A549 (cell line): ENCODE measurements at regions of chr5 and their contacts with region 1.

Region 1: DNA sequence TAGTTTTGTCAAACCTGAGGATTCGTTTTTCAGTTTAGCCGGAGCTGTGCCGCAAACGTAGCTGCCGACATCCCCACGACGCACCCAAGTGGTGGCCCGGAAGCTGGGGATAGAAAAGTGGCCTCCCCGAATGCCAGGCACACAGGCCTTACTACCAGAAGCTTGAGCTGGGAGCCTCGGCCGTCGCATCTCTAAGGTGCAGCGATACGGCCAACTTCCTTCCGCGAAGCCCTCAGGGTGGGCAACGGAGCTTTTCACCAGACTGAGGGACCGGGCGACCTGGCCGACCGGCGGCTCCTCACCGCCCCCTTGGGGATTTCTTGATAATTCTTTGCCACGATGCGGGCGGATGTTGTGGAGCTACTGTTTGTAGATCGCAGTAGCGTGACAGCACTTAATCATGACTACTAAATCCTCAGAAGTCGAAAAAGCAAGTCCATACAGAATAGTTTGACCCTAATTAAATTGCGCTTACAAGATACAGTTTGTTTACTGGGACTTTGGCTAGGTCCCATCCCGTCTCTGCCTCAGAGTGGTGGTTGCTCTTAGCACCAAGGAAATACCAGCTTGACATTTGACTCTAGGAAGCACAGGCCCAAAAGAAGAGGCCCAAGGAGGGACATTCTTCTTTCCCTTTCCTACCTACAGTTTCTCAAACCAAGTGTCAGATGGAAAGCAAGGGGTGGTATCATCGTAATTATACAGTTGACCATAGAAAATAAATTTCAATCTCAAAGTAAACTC is 613 bp upstream of the TMEM267 start:
- DNase-seq: peak; percentile 85 to 90
- ATAC-seq: peak; percentile 88 to 92
- H3K4me3 ChIP-seq: peak overlapping the region; percentile 63
- H3K27ac ChIP-seq: peak overlapping the region; percentile 91 to 96
- H3K4me1 ChIP-seq: peaks cover 26% of the 10 kb centered on the region
- CTCF ChIP-seq: peak; percentile 74
- EP300 ChIP-seq: no peak
- POLR2A ChIP-seq: no peak
- RAD21 ChIP-seq: peak; percentile 63 to 79

Region 2: DNA sequence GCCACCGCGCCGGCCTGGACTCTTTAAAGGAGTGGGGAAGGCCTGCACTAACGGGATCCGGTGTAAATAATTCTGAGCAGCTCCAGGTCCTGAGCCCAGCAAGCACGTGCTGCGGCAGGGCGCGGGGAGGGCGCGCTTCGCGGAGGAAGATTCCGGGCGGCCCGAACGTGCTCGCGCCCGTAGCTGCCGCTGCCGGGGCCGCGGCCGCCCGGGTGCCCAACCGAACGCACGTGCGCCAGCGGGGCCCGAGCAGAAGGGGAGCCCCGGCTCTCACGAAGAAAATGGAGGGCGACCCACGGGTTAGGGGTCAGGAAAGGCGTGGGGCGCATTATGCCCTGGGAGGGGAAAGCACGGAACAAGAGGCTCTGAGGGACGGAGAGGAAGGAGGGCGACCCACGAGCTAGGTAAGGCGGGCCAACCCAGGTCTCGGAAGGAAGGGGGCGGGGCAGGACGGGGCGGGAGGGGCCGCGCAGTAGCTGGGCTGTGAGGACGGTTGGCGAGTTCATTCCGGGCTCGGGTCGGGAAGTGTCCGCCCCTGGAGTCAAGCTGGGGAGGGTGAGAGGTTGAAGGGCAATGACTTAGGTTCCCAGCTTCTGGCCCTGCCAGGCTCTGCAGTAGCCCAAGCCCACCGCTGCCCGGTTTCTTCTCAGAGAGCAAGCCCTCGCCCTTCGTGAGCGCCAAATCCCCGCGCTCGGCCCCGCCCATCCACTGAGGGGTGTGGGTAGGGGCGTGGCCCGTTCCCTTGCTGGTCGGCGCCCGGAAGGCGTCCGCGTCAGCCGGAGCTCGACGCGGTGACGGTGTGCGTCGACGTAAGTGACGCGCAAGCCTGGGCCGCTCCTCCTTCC is 363.3 kb before region 1 on chr5 and contains the start of gene ZNF131:
- CTCF ChIA-PET with region 1: interaction called, 3 read pairs
- POLR2A ChIA-PET with region 1: interaction called, 31 read pairs
- DNase-seq: peak; percentile 86 to 98
- ATAC-seq: peak; percentile 94 to 95
- H3K4me3 ChIP-seq: peak within 1 kb of the TSS; percentile 78
- H3K27ac ChIP-seq: peak within 1 kb of the TSS; percentile 96 to 97
- H3K4me1 ChIP-seq: peaks cover 20% of the 10 kb centered on the region; the same call in 2 of the 3 replicates
- CTCF ChIP-seq: no peak
- EP300 ChIP-seq: no peak
- POLR2A ChIP-seq: peak; percentile 80
- RAD21 ChIP-seq: no peak
- polyA plus RNA-seq, gene ZNF131: 37.5 and 47.9 TPM in 2 replicates

Region 3: DNA sequence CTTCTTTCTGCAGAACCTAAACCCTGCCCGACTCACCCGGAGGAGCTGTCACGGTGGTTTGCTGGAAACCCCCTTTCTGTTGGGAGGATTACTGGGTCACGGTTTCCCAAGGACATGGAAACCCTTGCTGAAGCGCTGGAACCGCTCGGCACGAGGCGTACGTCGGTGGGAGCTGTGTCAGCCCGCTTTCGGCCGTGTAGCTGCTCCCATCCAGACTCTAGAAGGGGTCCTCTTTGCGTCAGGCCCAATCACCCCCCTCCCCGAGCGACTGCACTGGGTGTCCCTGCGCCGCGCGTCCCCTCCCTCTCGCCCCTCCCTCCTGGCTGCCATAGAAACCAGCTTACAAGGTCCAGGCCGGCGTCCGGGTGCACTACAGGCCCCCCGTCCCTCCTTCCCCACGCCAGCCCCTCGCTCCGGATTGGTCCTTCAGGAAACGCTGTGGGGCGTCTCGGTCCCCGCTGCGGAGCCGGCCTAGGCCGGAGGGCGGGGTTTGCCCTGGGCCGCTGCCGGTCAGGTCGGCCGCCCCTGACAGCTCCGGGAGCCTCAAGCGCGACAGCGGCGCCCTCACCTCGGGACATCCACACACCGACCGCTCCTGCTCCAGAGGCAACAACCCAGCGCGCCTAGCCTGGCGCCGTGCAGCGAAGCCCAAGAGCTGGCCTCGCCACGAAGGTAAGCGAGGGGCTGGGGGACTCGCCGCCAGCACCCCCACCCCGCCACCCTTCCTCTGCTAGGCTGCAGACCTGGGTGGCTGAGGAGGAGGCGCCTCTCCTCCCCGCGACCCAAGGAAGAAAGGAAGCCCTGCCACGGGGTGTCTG is 292.3 kb before region 1 on chr5 and contains the start of gene NIM1K:
- CTCF ChIA-PET with region 1: no interaction called
- POLR2A ChIA-PET with region 1: interaction called, 10 read pairs
- DNase-seq: peak; percentile 32 to 38
- ATAC-seq: peak; percentile 77 to 87
- H3K4me3 ChIP-seq: peak within 1 kb of the TSS; percentile 61
- H3K27ac ChIP-seq: peak within 1 kb of the TSS; percentile 23 to 71; a peak in 5 of 6 replicates
- H3K4me1 ChIP-seq: peaks cover 6% of the 10 kb centered on the region
- CTCF ChIP-seq: no peak
- EP300 ChIP-seq: no peak
- POLR2A ChIP-seq: no peak
- RAD21 ChIP-seq: no peak
- polyA plus RNA-seq, gene NIM1K: 0.23 and 0.26 TPM in 2 replicates

Region 4: GRCh38 chr5:43313035-43313853 is 171.0 kb before region 1 on chr5 and contains the start of gene HMGCS1:
- CTCF ChIA-PET with region 1: interaction called, 11 read pairs
- POLR2A ChIA-PET with region 1: interaction called, 29 read pairs
- DNase-seq: peak; percentile 98 to 100
- ATAC-seq: peak; percentile 95 to 96
- H3K4me3 ChIP-seq: peak within 1 kb of the TSS; percentile 88
- H3K27ac ChIP-seq: peak within 1 kb of the TSS; percentile 87 to 90
- H3K4me1 ChIP-seq: peaks cover 59% of the 10 kb centered on the region
- CTCF ChIP-seq: no peak
- EP300 ChIP-seq: no peak
- POLR2A ChIP-seq: peak; percentile 93
- RAD21 ChIP-seq: no peak
- polyA plus RNA-seq, gene HMGCS1: 54.1 and 72.8 TPM in 2 replicates

Region 5: GRCh38 chr5:43396762-43397304 is 87.4 kb before region 1 on chr5:
- CTCF ChIA-PET with region 1: interaction called, 55 read pairs
- POLR2A ChIA-PET with region 1: interaction called, 31 read pairs
- DNase-seq: peak in 1 of 2 experiments; percentile 17
- ATAC-seq: peak; percentile 75 to 83
- H3K4me3 ChIP-seq: peak overlapping the region; percentile 37
- H3K27ac ChIP-seq: peak overlapping the region; percentile 47 to 50; a peak in 5 of 6 replicates
- H3K4me1 ChIP-seq: peaks cover 2% of the 10 kb centered on the region; the same call in 1 of the 3 replicates
- CTCF ChIP-seq: no peak
- EP300 ChIP-seq: no peak
- POLR2A ChIP-seq: no peak
- RAD21 ChIP-seq: no peak

Region 6: GRCh38 chr5:43425965-43426364 is 58.3 kb before region 1 on chr5:
- CTCF ChIA-PET with region 1: interaction called, 20 read pairs
- POLR2A ChIA-PET with region 1: interaction called, 13 read pairs
- DNase-seq: peak in 1 of 2 experiments; percentile 52
- ATAC-seq: peak; percentile 68; a peak in 5 of 6 replicates
- H3K4me3 ChIP-seq: no peak overlapping the region
- H3K27ac ChIP-seq: peak overlapping the region; percentile 80 to 88
- H3K4me1 ChIP-seq: peaks cover 56% of the 10 kb centered on the region
- CTCF ChIP-seq: no peak
- EP300 ChIP-seq: no peak
- POLR2A ChIP-seq: no peak
- RAD21 ChIP-seq: no peak

Region 7: DNA sequence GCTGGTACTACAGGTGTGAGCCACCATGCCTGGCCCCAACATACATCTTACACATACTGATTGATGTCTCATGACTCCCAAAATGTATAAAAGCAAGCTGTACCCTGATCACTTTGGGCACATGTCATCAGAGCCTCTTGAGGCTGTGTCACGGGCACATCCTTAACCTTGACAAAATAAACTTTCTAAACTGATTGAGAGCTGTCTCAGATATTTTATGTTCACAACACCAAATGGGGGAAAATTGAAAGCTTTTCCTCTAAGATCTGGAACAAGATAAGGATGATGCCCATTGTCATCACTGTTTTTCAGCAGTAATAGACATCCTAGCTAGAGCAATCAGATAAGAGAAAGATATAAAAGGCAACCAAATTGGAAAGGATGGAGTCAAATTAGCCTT is 13.9 kb before region 1 on chr5:
- CTCF ChIA-PET with region 1: interaction called, 7 read pairs
- POLR2A ChIA-PET with region 1: interaction called, 13 read pairs
- DNase-seq: no peak
- ATAC-seq: no peak
- H3K4me3 ChIP-seq: no peak overlapping the region
- H3K27ac ChIP-seq: no peak overlapping the region
- H3K4me1 ChIP-seq: no peaks in the 10 kb centered on the region
- CTCF ChIP-seq: no peak
- EP300 ChIP-seq: no peak
- POLR2A ChIP-seq: no peak
- RAD21 ChIP-seq: no peak

Region 8: GRCh38 chr5:43592363-43592762 is 108.1 kb after region 1 on chr5:
- CTCF ChIA-PET with region 1: no interaction called
- POLR2A ChIA-PET with region 1: no interaction called
- DNase-seq: no peak
- ATAC-seq: no peak
- H3K4me3 ChIP-seq: no peak overlapping the region
- H3K27ac ChIP-seq: no peak overlapping the region
- H3K4me1 ChIP-seq: no peaks in the 10 kb centered on the region
- CTCF ChIP-seq: no peak
- EP300 ChIP-seq: no peak
- POLR2A ChIP-seq: no peak
- RAD21 ChIP-seq: no peak